Spleen (tissue), 13 donors: ENCODE measurements at regions of chr16 and their contacts with region 1.

Region 1: GRCh38 chr16:24568392-24568791 is 29.0 kb downstream of the RBBP6 start:
- DNase-seq: no peak
- H3K4me3 ChIP-seq: no peak overlapping the region
- H3K27ac ChIP-seq: no peak overlapping the region
- H3K4me1 ChIP-seq: no peaks in the 10 kb centered on the region
- H3K27me3 ChIP-seq: no peaks in the 10 kb centered on the region
- CTCF ChIP-seq: no peak
- POLR2A ChIP-seq: no peak

Region 2: DNA sequence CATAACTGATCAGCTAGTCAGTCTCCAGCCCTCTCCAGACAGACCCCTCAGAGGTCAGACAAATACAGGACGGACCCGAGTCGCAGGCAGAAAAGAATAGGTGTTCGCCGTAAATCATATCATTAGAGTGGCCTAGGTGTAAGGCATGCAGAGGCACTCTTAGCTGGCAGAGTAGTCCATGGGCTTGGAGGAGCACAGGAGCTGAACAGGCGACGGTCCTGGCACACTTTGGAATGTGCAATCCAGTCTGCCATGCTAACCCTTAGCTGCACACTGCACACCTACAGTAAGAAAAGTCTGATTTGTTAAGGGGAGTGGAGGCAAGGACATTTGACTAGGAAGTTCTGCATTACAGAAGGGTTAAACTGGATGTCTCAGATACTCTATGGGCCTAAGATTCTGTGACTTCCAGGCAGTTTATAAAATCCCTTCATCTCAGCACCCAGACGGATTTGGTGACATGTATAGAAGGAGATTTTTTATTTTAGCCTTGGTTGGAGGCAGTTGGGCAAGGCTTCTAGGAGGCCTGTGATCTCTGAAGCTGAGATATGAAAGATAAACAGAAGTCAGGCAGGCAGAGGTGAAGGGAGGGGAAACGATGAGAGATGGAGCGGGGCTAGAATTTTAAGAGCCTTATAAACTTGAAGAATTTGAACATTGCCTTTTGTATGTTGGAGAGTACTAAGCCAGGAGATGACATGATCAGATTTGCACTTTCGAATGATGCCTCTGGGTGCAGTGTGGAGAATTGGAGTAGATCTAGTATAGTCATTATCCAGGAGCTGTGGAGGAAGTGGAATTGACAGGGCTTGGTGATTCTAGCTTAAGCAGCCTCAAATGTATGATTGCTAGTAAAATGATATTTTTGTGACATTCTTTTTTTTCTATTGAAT is 242.8 kb after region 1 on chr16:
- intact Hi-C with region 1: loop called (anchors 10 kb)
- DNase-seq: no peak
- H3K4me3 ChIP-seq: no peak overlapping the region
- H3K27ac ChIP-seq: no peak overlapping the region
- H3K4me1 ChIP-seq: no peaks in the 10 kb centered on the region
- H3K27me3 ChIP-seq: no peaks in the 10 kb centered on the region
- CTCF ChIP-seq: no peak
- POLR2A ChIP-seq: no peak